ENCODE measurements at regions of chr7 and their contacts with region 1.

Region 1: GRCh38 chr7:78702770-78703169 is 750.7 kb downstream of the MAGI2 start:
- DNase-seq: peak; percentile 96
- ATAC-seq: peak; percentile 99
- H3K4me3 ChIP-seq: no peak overlapping the region
- H3K27ac ChIP-seq: peak overlapping the region; percentile 41
- H3K4me1 ChIP-seq: peaks cover 19% of the 10 kb centered on the region
- H3K27me3 ChIP-seq: no peaks in the 10 kb centered on the region
- CTCF ChIP-seq: no peak

Region 2: GRCh38 chr7:78562191-78562590 is 140.6 kb before region 1 on chr7:
- CTCF ChIA-PET with region 1: no interaction called
- POLR2A ChIA-PET with region 1: no interaction called
- intact Hi-C with region 1: no loop called
- DNase-seq: no peak
- ATAC-seq: no peak
- H3K4me3 ChIP-seq: no peak overlapping the region
- H3K27ac ChIP-seq: no peak overlapping the region
- H3K4me1 ChIP-seq: no peaks in the 10 kb centered on the region
- H3K27me3 ChIP-seq: peaks cover 42% of the 10 kb centered on the region
- CTCF ChIP-seq: no peak

Region 3: DNA sequence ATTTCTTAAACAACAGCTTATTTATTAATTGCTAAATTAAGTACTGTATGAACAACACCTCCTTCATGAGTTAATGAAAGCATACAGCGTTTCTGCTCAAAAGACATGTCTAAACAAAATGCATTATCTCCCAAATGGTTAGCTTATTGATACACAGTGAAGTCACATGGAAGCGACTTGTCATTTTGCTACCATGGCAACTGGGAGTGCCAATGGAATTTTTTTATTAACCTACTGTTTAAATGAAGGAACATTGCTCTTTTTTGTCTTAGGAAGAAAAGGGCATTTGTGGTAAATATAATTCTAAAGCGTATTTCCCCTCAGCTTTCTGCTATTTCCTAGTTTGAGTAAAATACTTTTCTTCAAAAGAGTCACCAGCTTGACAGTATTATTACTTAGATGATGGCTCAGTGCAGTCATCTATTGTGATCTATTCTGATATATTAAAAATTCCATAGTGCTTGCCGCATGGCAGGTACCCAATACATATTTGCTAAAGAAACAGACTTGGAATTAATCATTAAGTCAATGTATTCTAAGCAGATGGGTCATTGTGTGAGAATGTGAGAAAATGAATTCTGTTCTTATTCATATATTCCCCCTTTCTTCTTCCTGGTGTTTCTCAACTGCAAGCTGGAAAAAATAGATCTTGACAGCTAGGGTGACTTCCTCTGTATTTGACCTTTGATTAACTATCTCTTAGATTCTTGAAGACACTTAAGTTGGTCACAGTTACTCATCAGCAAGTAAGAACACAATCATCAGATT is 67.6 kb before region 1 on chr7:
- CTCF ChIA-PET with region 1: no interaction called
- POLR2A ChIA-PET with region 1: no interaction called
- intact Hi-C with region 1: loop called (anchors 1 kb)
- DNase-seq: peak; percentile 66
- ATAC-seq: peak; percentile 63
- H3K4me3 ChIP-seq: no peak overlapping the region
- H3K27ac ChIP-seq: peak overlapping the region; percentile 54
- H3K4me1 ChIP-seq: peaks cover 24% of the 10 kb centered on the region; the same call in 1 of the 2 replicates
- H3K27me3 ChIP-seq: no peaks in the 10 kb centered on the region
- CTCF ChIP-seq: no peak

Region 4: DNA sequence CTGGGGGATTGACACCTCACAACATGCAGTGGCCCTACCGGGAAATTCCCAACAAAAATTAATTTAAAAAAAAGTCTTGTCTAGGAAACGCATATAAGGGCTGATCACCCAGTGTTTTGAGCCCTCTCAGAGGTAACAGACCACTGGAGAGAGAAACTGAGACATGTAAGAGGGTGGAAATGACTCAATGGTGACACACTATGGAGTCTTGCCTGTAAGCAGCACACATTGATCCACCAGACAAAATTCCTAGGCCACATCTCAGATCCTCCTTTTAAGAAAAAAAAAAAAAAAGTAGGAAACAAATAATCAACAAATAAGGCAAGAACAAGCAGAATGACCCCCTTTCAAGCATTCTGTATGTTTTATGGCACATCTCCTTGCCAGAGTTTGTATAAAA is 454.5 kb after region 1 on chr7:
- CTCF ChIA-PET with region 1: no interaction called
- POLR2A ChIA-PET with region 1: no interaction called
- intact Hi-C with region 1: no loop called
- DNase-seq: no peak
- ATAC-seq: no peak
- H3K4me3 ChIP-seq: no peak overlapping the region
- H3K27ac ChIP-seq: no peak overlapping the region
- H3K4me1 ChIP-seq: no peaks in the 10 kb centered on the region
- H3K27me3 ChIP-seq: no peaks in the 10 kb centered on the region
- CTCF ChIP-seq: no peak